Ovary (tissue), 10 donors: ENCODE measurements at regions of chr19 and their contacts with region 1.

Region 1: GRCh38 chr19:43743022-43743421 is 11.7 kb downstream of the SMG9 start:
- DNase-seq: no peak
- H3K4me3 ChIP-seq: no peak overlapping the region
- H3K27ac ChIP-seq: no peak overlapping the region
- H3K4me1 ChIP-seq: no peaks in the 10 kb centered on the region
- H3K27me3 ChIP-seq: no peaks in the 10 kb centered on the region
- CTCF ChIP-seq: no peak
- EP300 ChIP-seq: no peak
- POLR2A ChIP-seq: no peak

Region 2: DNA sequence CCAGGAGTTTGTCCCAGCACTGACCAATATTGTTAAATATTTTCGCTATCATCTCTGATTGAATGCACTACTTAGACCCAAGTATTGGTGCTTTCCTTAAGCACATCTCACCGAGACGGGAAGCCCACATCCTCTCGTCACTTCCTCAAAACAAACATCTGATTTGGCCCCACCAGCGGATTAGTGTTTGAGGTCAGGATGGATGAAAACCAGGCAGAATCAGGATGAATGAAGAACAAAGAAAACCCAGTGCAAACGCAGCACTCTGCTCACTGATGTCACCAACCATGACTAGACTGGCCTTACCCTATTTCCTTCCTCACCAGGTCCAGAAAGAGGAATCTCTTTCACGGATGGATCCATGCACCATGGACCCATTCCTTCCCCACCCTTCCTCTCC is 79.0 kb before region 1 on chr19:
- intact Hi-C with region 1: no loop called
- DNase-seq: no peak
- H3K4me3 ChIP-seq: no peak overlapping the region
- H3K27ac ChIP-seq: no peak overlapping the region
- H3K4me1 ChIP-seq: peaks cover 6% of the 10 kb centered on the region
- H3K27me3 ChIP-seq: no peaks in the 10 kb centered on the region
- CTCF ChIP-seq: no peak
- EP300 ChIP-seq: no peak
- POLR2A ChIP-seq: no peak

Region 3: DNA sequence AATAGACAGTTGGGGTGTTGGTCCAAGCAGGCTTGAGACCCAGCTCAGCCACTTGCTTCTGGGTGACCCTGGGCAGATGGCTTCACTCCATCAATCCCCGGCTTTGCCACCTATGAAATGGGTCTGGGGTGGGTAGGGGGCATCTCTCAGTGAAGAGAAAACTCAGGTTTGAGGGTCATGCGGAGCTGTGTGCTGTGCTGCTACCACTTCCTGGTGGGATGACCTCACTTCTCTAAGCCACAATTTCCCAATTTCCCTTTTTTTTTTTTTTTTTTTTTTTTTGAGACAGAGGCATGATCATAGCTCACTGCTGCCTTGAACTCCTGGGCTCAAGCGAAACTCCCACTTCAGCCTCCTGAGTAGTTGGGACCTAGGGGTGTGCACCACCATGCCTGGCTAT is 68.4 kb before region 1 on chr19:
- intact Hi-C with region 1: loop called in 1 of 4 experiments (anchors 5 kb)
- DNase-seq: no peak
- H3K4me3 ChIP-seq: no peak overlapping the region
- H3K27ac ChIP-seq: no peak overlapping the region
- H3K4me1 ChIP-seq: peaks cover 2% of the 10 kb centered on the region
- H3K27me3 ChIP-seq: no peaks in the 10 kb centered on the region
- CTCF ChIP-seq: no peak
- EP300 ChIP-seq: no peak
- POLR2A ChIP-seq: no peak

Region 4: DNA sequence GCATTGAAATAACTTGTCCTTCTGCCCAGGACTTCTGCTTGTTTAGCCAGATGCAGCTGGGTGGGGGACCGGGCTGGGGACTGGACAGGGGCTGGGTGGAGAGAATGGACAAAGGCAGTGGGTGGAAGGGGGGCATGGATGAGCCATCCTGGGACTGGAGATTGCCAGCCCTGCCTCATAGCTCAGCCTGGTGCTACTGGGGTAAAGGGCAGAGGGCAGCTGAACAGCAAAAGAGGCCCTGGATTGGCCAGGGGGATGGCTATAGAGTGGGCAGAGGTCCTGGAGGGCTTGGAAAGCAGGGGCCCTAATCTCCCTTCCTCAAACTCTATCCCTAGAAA is 55.4 kb before region 1 on chr19:
- intact Hi-C with region 1: no loop called
- DNase-seq: no peak
- H3K4me3 ChIP-seq: no peak overlapping the region
- H3K27ac ChIP-seq: no peak overlapping the region
- H3K4me1 ChIP-seq: no peaks in the 10 kb centered on the region
- H3K27me3 ChIP-seq: no peaks in the 10 kb centered on the region
- CTCF ChIP-seq: no peak
- EP300 ChIP-seq: no peak
- POLR2A ChIP-seq: no peak

Region 5: GRCh38 chr19:43784981-43785808 is 42.2 kb after region 1 on chr19:
- intact Hi-C with region 1: loop called in 2 of 4 experiments (anchors 2 to 5 kb)
- DNase-seq: peak in 1 of 5 donors; percentile 38
- H3K4me3 ChIP-seq: no peak overlapping the region
- H3K27ac ChIP-seq: no peak overlapping the region
- H3K4me1 ChIP-seq: no peaks in the 10 kb centered on the region
- H3K27me3 ChIP-seq: no peaks in the 10 kb centered on the region
- CTCF ChIP-seq: peak; percentile 50 to 67 (median 66)
- EP300 ChIP-seq: no peak
- POLR2A ChIP-seq: no peak

Region 6: GRCh38 chr19:44332145-44332544 is 589.1 kb after region 1 on chr19:
- intact Hi-C with region 1: no loop called
- DNase-seq: no peak
- H3K4me3 ChIP-seq: no peak overlapping the region
- H3K27ac ChIP-seq: no peak overlapping the region
- H3K4me1 ChIP-seq: no peaks in the 10 kb centered on the region
- H3K27me3 ChIP-seq: no peaks in the 10 kb centered on the region
- CTCF ChIP-seq: no peak
- EP300 ChIP-seq: no peak
- POLR2A ChIP-seq: no peak